GM12878 (cell line): ENCODE measurements at regions of chr20 and their contacts with region 1.

Region 1: DNA sequence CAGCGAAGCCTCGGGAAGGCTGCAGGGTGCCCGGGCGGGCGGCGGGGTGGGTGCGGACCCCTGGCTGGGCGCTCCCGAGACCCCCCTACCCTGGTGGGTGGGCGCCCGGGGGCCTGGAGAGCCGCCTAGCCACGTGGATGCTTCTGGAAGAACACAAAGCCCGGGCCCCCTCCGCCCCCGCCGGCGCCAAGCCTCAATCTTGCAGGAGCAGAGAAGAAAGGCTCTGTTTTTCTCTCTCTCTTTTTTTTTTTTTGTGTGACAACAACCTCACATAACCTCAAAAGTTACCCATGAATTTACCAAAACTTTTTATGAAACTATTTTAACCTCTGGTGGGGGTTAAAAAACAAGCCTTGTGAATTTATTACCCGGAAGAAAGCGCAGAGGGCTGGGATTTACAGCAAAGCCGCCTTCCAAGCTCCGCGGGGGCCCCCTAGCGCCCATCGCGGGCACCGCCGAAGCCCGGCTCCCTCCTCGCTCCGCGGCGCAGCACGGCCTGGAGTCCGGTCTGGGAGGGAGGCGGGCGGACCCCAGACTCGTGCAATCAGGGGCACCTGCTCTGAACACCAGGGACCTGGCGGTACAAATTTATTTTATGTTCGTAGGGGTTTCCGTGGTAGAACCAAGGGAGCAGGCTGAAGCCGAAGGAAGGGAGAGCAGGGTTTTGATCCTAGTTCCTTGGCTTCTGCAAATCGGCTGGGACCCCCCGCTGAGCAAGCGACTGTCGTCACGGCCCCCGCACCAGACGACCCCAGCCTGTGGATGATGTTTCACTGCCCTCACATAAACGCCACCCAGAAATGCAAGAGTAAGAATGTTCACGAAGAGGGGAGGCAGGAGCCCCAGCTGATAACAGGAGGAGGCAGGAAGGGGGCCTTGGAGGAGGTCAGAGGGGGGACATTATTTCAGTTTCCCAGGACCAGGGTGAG is 58.9 kb downstream of the ZNF831 start:
- DNase-seq: peak; percentile 1
- ATAC-seq: peak; percentile 100
- H3K4me3 ChIP-seq: peak overlapping the region; percentile 40; the same call in 1 of the 2 replicates
- H3K27ac ChIP-seq: no peak overlapping the region
- H3K4me1 ChIP-seq: no peaks in the 10 kb centered on the region
- H3K27me3 ChIP-seq: peaks cover 8 to 11% of the 10 kb centered on the region in 2 experiments
- CTCF ChIP-seq: peak; percentile 93 to 96 (median 94)
- EP300 ChIP-seq: no peak
- POLR2A ChIP-seq: no peak
- RAD21 ChIP-seq: peak; percentile 85

Region 2: GRCh38 chr20:58829531-58829941 is 393.0 kb before region 1 on chr20:
- CTCF ChIA-PET with region 1: no interaction called
- POLR2A ChIA-PET with region 1: no interaction called
- RAD21 ChIA-PET with region 1: no interaction called
- SMC1A ChIA-PET with region 1: no interaction called
- in situ Hi-C with region 1: no loop called
- intact Hi-C with region 1: no loop called
- DNase-seq: no peak
- ATAC-seq: no peak
- H3K4me3 ChIP-seq: no peak overlapping the region
- H3K27ac ChIP-seq: no peak overlapping the region
- H3K4me1 ChIP-seq: no peaks in the 10 kb centered on the region
- H3K27me3 ChIP-seq: no peaks in the 10 kb centered on the region
- CTCF ChIP-seq: no peak
- EP300 ChIP-seq: no peak
- POLR2A ChIP-seq: no peak
- RAD21 ChIP-seq: no peak

Region 3: DNA sequence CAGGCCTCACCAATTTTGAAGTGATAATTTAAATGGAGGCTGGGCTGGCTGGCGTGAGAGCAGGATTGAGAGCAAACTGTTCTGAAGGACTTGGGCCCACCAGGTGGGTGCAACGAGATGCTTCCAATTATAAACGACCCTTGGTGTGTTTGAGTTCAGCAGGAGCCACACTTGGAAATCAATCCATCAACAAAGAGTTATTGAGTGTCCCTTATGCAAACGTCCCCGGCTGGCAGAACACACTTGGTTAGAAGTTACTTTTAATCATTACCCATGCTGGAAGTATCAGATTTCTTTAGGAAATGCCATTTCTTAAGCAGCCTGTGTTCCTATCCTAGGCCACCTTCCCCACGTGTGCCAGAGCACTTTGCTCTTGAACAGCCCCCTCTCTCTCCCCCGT is 96.7 kb before region 1 on chr20:
- CTCF ChIA-PET with region 1: no interaction called
- POLR2A ChIA-PET with region 1: no interaction called
- RAD21 ChIA-PET with region 1: no interaction called
- SMC1A ChIA-PET with region 1: no interaction called
- in situ Hi-C with region 1: no loop called
- intact Hi-C with region 1: no loop called
- DNase-seq: no peak
- ATAC-seq: no peak
- H3K4me3 ChIP-seq: no peak overlapping the region
- H3K27ac ChIP-seq: no peak overlapping the region
- H3K4me1 ChIP-seq: peaks cover under 1% of the 10 kb centered on the region; the same call in 1 of the 2 replicates
- H3K27me3 ChIP-seq: peaks cover 2 to 15% of the 10 kb centered on the region in 2 experiments
- CTCF ChIP-seq: no peak
- EP300 ChIP-seq: no peak
- POLR2A ChIP-seq: no peak
- RAD21 ChIP-seq: no peak

Region 4: DNA sequence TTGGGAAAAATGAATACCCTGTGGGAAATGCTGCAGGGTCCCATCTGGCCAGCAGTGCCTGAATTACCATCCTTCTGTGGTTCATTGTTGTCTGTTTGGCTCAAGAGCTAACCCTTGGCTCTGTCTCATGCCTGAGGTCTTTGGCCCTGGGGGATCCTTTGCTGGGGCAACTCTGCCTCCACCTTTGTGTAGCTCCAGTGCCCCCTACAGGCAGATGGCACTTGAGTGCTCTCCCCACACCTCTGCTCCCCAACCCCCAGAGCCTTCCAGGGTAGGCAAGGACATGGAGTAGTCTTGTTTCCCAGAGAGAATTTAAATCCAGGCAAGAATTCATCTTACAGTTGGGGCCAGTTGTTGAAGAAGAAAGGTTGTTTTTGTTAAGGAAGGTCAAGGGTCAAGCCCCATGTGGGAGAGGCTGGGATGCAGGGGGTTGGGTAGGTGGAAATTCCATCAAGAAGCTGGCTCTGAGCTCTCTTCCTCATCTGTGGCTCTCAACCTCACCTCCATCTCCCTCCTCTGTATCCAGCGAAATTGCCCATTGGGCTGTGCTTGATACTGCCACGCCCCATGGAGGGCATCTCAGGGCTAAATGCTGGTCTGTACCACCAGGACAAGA is 14.7 kb before region 1 on chr20:
- CTCF ChIA-PET with region 1: interaction called, 10 read pairs
- POLR2A ChIA-PET with region 1: no interaction called
- RAD21 ChIA-PET with region 1: interaction called, 4 read pairs
- SMC1A ChIA-PET with region 1: interaction called, 4 read pairs
- in situ Hi-C with region 1: no loop called
- intact Hi-C with region 1: no loop called
- DNase-seq: peak; percentile 2
- ATAC-seq: peak; percentile 97
- H3K4me3 ChIP-seq: no peak overlapping the region
- H3K27ac ChIP-seq: no peak overlapping the region
- H3K4me1 ChIP-seq: no peaks in the 10 kb centered on the region
- H3K27me3 ChIP-seq: no peaks in the 10 kb centered on the region
- CTCF ChIP-seq: peak; percentile 76 to 91 (median 78)
- EP300 ChIP-seq: no peak
- POLR2A ChIP-seq: no peak
- RAD21 ChIP-seq: peak; percentile 87